GM12878 (cell line): ENCODE measurements at regions of chr1 and their contacts with region 1.

Region 1: GRCh38 chr1:162596514-162597170 is 35.1 kb downstream of the UAP1 start:
- DNase-seq: no peak
- ATAC-seq: peak; percentile 70
- H3K4me3 ChIP-seq: no peak overlapping the region
- H3K27ac ChIP-seq: no peak overlapping the region
- H3K4me1 ChIP-seq: no peaks in the 10 kb centered on the region
- H3K27me3 ChIP-seq: no peaks in the 10 kb centered on the region
- CTCF ChIP-seq: no peak
- EP300 ChIP-seq: no peak
- POLR2A ChIP-seq: no peak
- RAD21 ChIP-seq: no peak

Region 2: GRCh38 chr1:162564762-162565218 is 31.9 kb before region 1 on chr1:
- CTCF ChIA-PET with region 1: interaction called, 8 read pairs
- POLR2A ChIA-PET with region 1: no interaction called
- RAD21 ChIA-PET with region 1: interaction called, 4 read pairs
- SMC1A ChIA-PET with region 1: interaction called, 14 read pairs
- in situ Hi-C with region 1: no loop called
- intact Hi-C with region 1: no loop called
- DNase-seq: no peak
- ATAC-seq: no peak
- H3K4me3 ChIP-seq: no peak overlapping the region
- H3K27ac ChIP-seq: no peak overlapping the region
- H3K4me1 ChIP-seq: no peaks in the 10 kb centered on the region; the same call in 1 of the 2 replicates
- H3K27me3 ChIP-seq: no peaks in the 10 kb centered on the region
- CTCF ChIP-seq: no peak
- EP300 ChIP-seq: no peak
- POLR2A ChIP-seq: no peak
- RAD21 ChIP-seq: no peak

Region 3: GRCh38 chr1:162571696-162572095 is 24.9 kb before region 1 on chr1:
- CTCF ChIA-PET with region 1: interaction called, 8 read pairs
- POLR2A ChIA-PET with region 1: interaction called, 7 read pairs
- RAD21 ChIA-PET with region 1: interaction called, 4 read pairs
- SMC1A ChIA-PET with region 1: interaction called, 14 read pairs
- in situ Hi-C with region 1: no loop called
- intact Hi-C with region 1: no loop called
- DNase-seq: no peak
- ATAC-seq: no peak
- H3K4me3 ChIP-seq: no peak overlapping the region
- H3K27ac ChIP-seq: no peak overlapping the region
- H3K4me1 ChIP-seq: no peaks in the 10 kb centered on the region
- H3K27me3 ChIP-seq: no peaks in the 10 kb centered on the region
- CTCF ChIP-seq: no peak
- EP300 ChIP-seq: no peak
- POLR2A ChIP-seq: no peak
- RAD21 ChIP-seq: no peak

Region 4: GRCh38 chr1:163054181-163054591 is 457.5 kb after region 1 on chr1:
- CTCF ChIA-PET with region 1: no interaction called
- POLR2A ChIA-PET with region 1: no interaction called
- RAD21 ChIA-PET with region 1: no interaction called
- SMC1A ChIA-PET with region 1: no interaction called
- in situ Hi-C with region 1: no loop called
- intact Hi-C with region 1: no loop called
- DNase-seq: no peak
- ATAC-seq: no peak
- H3K4me3 ChIP-seq: no peak overlapping the region
- H3K27ac ChIP-seq: no peak overlapping the region
- H3K4me1 ChIP-seq: no peaks in the 10 kb centered on the region
- H3K27me3 ChIP-seq: peaks cover 0 to 10% of the 10 kb centered on the region in 2 experiments; a peak in 2 of 4 replicates
- CTCF ChIP-seq: no peak
- EP300 ChIP-seq: no peak
- POLR2A ChIP-seq: no peak
- RAD21 ChIP-seq: no peak